CD14-positive monocyte (primary cell): ENCODE measurements at regions of chr2 and their contacts with region 1.

Region 1: DNA sequence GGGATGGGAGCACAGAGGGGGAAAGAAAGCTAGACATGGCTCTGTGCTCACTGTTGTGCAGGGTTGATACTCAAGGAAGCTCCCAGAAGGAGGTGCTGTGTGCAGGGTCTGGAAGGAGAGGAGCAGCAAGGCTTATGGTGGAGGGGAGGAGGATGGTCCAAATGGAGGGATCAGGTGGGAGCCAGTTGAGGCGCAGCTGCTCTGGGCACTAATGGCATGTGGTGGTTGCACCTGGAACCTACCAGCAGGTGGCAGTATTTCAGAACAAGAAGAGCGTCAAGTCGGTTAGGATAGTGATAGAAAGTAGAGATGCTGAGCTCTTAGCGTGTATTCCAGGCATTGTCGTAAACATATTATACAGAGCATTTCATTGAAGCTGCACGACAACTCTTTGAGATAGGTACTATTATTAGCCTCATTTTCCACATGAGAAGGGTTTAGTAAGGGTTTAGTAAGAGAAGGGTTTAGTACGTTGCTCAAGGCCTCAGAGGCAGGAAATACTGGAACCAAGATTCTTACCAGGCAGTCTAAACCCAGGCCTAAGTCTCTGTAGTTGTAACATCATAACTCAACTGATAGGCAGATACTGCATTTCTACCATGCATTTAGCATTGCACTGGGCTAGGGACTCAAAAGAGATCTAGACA is 223.7 kb downstream of the CYP26B1 start:
- DNase-seq: peak; percentile 16 to 39 (median 29)
- H3K4me3 ChIP-seq: no peak overlapping the region
- H3K4me3 Mint-ChIP-seq: peak overlapping the region in 1 of 2 donors; percentile 44
- H3K27ac ChIP-seq: no peak overlapping the region
- H3K27ac Mint-ChIP-seq: no peak overlapping the region
- H3K4me1 ChIP-seq: peaks cover 0 to 13% of the 10 kb centered on the region in 2 donors
- H3K4me1 Mint-ChIP-seq: peaks cover 13% of the 10 kb centered on the region
- H3K27me3 ChIP-seq: no peaks in the 10 kb centered on the region
- H3K27me3 Mint-ChIP-seq: peaks cover 2 to 8% (median 3%) of the 10 kb centered on the region in 3 donors
- CTCF ChIP-seq: peak; percentile 81

Region 2: DNA sequence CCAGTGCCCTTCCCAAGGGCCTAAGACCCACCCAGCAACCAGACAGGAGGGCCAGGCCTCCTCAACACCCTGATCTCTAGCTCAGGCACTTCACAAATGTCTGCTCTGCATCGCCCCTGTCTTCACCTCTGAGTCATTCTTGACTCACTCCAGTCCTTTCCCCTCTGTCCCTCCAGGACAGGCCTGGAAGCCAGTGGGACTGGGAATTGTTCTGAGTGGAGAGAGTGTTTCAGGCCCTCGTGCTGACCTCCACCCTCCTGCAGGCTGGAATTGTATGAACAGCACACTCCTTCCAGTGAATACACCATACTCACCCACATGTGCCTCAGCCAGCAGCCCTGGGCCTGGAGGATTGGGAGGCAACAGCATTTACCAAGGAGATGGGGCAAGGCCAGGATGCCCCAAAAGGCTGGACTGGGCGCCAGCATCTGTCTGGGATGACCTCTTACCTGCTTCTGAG is 80.6 kb before region 1 on chr2:
- intact Hi-C with region 1: no loop called
- DNase-seq: no peak
- H3K4me3 ChIP-seq: no peak overlapping the region
- H3K4me3 Mint-ChIP-seq: no peak overlapping the region
- H3K27ac ChIP-seq: no peak overlapping the region
- H3K27ac Mint-ChIP-seq: no peak overlapping the region
- H3K4me1 ChIP-seq: no peaks in the 10 kb centered on the region
- H3K4me1 Mint-ChIP-seq: no peaks in the 10 kb centered on the region
- H3K27me3 ChIP-seq: no peaks in the 10 kb centered on the region
- H3K27me3 Mint-ChIP-seq: peaks cover 1 to 4% (median 3%) of the 10 kb centered on the region in 3 donors
- CTCF ChIP-seq: no peak

Region 3: DNA sequence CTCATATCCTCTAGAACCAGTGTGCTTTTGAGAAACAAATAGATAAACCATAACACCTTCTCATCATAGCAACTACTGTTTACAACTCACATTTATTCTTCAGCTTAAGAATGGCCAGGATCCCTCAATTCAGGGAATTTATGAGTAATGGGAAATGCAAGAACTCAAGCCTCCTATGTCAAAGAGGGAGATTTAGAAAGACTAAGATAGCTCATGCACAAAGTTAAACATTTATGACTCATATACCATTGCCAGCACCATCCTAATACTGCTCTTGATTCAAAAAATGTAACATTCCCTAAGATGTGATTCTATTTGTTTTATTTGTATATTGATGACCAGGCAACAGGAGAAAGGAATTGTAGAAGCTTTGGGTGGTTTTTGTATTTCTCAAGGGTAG is 50.8 kb after region 1 on chr2:
- intact Hi-C with region 1: no loop called
- DNase-seq: no peak
- H3K4me3 ChIP-seq: no peak overlapping the region
- H3K4me3 Mint-ChIP-seq: no peak overlapping the region
- H3K27ac ChIP-seq: no peak overlapping the region
- H3K27ac Mint-ChIP-seq: no peak overlapping the region
- H3K4me1 ChIP-seq: no peaks in the 10 kb centered on the region
- H3K4me1 Mint-ChIP-seq: no peaks in the 10 kb centered on the region
- H3K27me3 ChIP-seq: no peaks in the 10 kb centered on the region
- H3K27me3 Mint-ChIP-seq: peaks cover 0 to 3% (median 0%) of the 10 kb centered on the region in 3 donors
- CTCF ChIP-seq: no peak

Region 4: GRCh38 chr2:72579591-72580180 is 655.7 kb after region 1 on chr2:
- intact Hi-C with region 1: loop called in 1 of 2 experiments (anchors 2 kb)
- DNase-seq: peak in 1 of 3 donors; percentile 8
- H3K4me3 ChIP-seq: no peak overlapping the region
- H3K4me3 Mint-ChIP-seq: no peak overlapping the region
- H3K27ac ChIP-seq: no peak overlapping the region
- H3K27ac Mint-ChIP-seq: no peak overlapping the region
- H3K4me1 ChIP-seq: no peaks in the 10 kb centered on the region
- H3K4me1 Mint-ChIP-seq: no peaks in the 10 kb centered on the region
- H3K27me3 ChIP-seq: no peaks in the 10 kb centered on the region
- H3K27me3 Mint-ChIP-seq: peaks cover 0 to 3% (median 2%) of the 10 kb centered on the region in 3 donors
- CTCF ChIP-seq: peak; percentile 59

Region 5: GRCh38 chr2:72745679-72746368 is 821.8 kb after region 1 on chr2:
- intact Hi-C with region 1: loop called in 1 of 2 experiments (anchors 10 kb)
- DNase-seq: peak in 2 of 3 donors; percentile 7 to 12
- H3K4me3 ChIP-seq: no peak overlapping the region
- H3K4me3 Mint-ChIP-seq: no peak overlapping the region
- H3K27ac ChIP-seq: no peak overlapping the region
- H3K27ac Mint-ChIP-seq: no peak overlapping the region
- H3K4me1 ChIP-seq: no peaks in the 10 kb centered on the region
- H3K4me1 Mint-ChIP-seq: no peaks in the 10 kb centered on the region
- H3K27me3 ChIP-seq: no peaks in the 10 kb centered on the region
- H3K27me3 Mint-ChIP-seq: no peaks in the 10 kb centered on the region
- CTCF ChIP-seq: peak; percentile 73